ENCODE measurements at regions of chr1 and their contacts with region 1.

Region 1: DNA sequence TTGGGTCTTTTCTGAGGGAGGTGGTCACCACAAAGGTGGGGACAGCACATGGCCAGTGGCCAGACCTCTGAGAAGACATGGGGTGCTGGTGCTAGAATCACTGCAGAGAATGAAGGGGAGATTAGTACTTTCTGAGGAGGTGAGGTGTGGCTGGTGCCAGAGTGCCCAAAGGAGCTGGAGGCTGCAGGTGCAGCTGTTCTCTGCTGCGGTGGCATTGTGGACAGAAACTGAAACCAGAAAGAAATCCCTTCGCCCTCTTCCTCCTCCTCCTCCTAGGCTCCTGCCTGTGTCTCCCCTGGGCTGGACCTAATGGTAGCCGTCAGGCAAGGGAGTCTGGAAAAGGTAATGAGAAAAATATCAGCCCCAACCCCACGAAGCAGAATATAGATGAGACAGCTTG is 261.7 kb downstream of the TM2D1 start:
- DNase-seq: no peak
- ATAC-seq: no peak
- H3K4me3 Mint-ChIP-seq: no peak overlapping the region
- H3K27ac Mint-ChIP-seq: no peak overlapping the region
- H3K4me1 Mint-ChIP-seq: no peaks in the 10 kb centered on the region
- H3K27me3 Mint-ChIP-seq: no peaks in the 10 kb centered on the region
- CTCF ChIP-seq: no peak

Region 2: DNA sequence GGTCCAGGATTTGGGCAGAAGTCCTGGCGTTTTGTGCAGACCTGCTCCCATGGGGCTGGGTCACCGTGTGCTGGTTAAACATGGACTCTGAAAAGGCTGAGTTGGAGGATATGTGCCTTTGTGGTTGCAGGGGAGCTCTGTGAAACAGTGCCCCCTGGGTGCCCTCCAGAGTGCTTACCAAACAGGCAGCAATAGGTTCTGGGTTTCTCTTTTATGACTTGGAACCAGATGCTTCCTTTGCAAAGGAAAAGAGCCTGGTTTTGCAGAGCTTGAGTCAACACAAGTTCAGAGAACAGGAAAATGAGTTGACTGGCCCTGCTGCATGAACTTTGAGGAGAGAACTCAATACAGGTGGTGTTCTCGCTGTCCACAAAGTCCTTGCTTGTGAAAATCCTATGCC is 27.2 kb before region 1 on chr1:
- CTCF ChIA-PET with region 1: no interaction called
- POLR2A ChIA-PET with region 1: no interaction called
- intact Hi-C with region 1: no loop called
- DNase-seq: peak; percentile 28
- ATAC-seq: no peak
- H3K4me3 Mint-ChIP-seq: no peak overlapping the region
- H3K27ac Mint-ChIP-seq: no peak overlapping the region
- H3K4me1 Mint-ChIP-seq: no peaks in the 10 kb centered on the region
- H3K27me3 Mint-ChIP-seq: no peaks in the 10 kb centered on the region
- CTCF ChIP-seq: no peak

Region 3: GRCh38 chr1:61588736-61589672 is 125.8 kb after region 1 on chr1:
- CTCF ChIA-PET with region 1: interaction called, 3 read pairs
- POLR2A ChIA-PET with region 1: no interaction called
- intact Hi-C with region 1: loop called (anchors 10 kb)
- DNase-seq: peak; percentile 83
- ATAC-seq: peak; percentile 83
- H3K4me3 Mint-ChIP-seq: no peak overlapping the region
- H3K27ac Mint-ChIP-seq: no peak overlapping the region
- H3K4me1 Mint-ChIP-seq: no peaks in the 10 kb centered on the region
- H3K27me3 Mint-ChIP-seq: peaks cover under 1% of the 10 kb centered on the region
- CTCF ChIP-seq: peak; percentile 73